AG04449 (cell line): ENCODE measurements at regions of chr13 and their contacts with region 1.

Region 1: GRCh38 chr13:31538067-31539042 is 201.0 kb upstream of the RXFP2 start:
- DNase-seq: no peak
- H3K4me3 ChIP-seq: no peak overlapping the region
- CTCF ChIP-seq: peak; percentile 61

Region 2: GRCh38 chr13:31161828-31162590 is 376.3 kb before region 1 on chr13 and contains the start of gene HSPH1:
- CTCF ChIA-PET with region 1: no interaction called
- POLR2A ChIA-PET with region 1: no interaction called
- DNase-seq: peak; percentile 89
- H3K4me3 ChIP-seq: peak within 1 kb of the TSS; percentile 96
- CTCF ChIP-seq: peak; percentile 43

Region 3: DNA sequence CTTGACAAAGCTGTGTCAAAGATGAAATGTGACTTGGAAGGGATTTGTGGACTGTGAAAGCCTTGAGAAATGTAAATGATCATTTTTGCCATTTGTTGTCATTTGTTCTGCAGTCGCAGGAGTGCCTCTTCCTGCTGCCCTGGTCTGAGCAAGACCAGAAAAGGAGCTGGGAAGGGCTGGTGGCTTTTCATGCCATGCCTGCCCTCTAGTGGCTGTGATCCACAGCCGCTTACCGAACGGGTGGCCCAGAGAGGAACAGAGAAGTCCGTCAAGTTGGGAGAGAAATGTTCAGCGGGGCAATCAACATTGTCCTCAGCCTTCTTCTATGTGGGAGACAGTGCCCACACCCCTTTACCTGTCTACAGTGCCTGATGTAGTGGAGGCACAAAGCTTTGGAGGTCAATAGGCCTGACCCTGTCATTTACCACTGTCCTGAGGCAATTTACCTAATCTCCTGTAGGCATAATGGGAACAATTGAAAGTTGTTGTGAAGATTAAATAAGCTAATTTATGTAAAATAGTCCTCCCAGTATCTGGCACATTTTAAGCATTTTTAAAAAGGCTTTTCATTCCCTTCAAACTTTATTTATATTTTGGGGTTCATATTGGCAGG is 114.1 kb before region 1 on chr13:
- CTCF ChIA-PET with region 1: interaction called, 43 read pairs
- POLR2A ChIA-PET with region 1: no interaction called
- DNase-seq: peak; percentile 23
- H3K4me3 ChIP-seq: no peak overlapping the region
- CTCF ChIP-seq: peak; percentile 91

Region 4: GRCh38 chr13:31518645-31519044 is 19.7 kb before region 1 on chr13:
- CTCF ChIA-PET with region 1: interaction called, 24 read pairs
- POLR2A ChIA-PET with region 1: no interaction called
- DNase-seq: no peak
- H3K4me3 ChIP-seq: no peak overlapping the region
- CTCF ChIP-seq: no peak

Region 5: DNA sequence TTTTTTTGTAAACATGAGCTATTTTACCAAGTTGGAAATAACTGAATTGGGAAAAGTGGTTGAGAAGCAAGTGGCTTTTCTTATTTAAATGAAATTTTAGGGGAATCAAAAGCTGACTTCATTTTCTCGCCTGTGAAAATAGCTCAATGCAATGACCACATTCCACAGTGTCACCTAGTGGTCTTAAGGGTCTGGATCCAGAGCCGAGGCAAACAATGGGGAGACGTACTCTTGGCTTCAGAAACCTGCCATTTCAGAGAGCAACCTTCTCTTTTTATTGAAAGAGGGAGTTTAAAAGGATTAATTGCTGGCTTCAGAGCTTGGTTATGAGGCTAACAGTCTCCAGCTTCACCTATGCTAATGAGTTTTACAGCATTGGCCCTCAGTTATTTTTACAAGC is 161.3 kb after region 1 on chr13:
- CTCF ChIA-PET with region 1: interaction called, 10 read pairs
- POLR2A ChIA-PET with region 1: no interaction called
- DNase-seq: no peak
- H3K4me3 ChIP-seq: no peak overlapping the region
- CTCF ChIP-seq: peak; percentile 15

Region 6: DNA sequence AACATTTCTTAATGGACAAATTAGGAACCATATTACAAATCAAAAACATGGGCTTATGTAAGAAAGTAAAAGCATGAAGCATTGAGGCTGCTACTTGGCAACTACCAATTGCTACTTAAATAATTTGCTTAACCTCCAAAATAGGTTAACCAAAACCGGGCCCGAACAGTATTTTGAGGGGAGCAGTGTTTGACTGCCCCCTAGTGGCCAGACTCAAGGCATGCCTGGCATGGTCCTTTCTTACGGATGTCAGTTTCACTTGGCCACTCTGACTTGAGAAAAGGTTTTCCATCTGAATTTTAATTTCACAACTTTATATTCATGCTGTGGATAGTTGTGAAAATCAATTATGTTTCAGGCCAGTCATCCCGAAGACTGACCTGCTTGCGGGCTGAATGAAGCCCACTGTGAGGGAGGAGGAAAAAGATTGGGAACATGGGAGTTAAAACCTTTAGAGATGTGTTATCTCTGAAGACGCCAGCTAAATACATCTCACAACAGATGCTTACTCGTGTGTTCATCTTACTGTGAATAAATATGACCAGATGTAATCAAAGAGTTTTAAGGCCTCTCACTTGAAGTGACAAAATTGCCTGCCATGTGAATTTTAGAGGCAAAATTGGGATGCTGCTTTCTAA is 203.9 kb after region 1 on chr13:
- CTCF ChIA-PET with region 1: interaction called, 133 read pairs
- POLR2A ChIA-PET with region 1: no interaction called
- DNase-seq: no peak
- H3K4me3 ChIP-seq: no peak overlapping the region
- CTCF ChIP-seq: peak; percentile 82

Region 7: DNA sequence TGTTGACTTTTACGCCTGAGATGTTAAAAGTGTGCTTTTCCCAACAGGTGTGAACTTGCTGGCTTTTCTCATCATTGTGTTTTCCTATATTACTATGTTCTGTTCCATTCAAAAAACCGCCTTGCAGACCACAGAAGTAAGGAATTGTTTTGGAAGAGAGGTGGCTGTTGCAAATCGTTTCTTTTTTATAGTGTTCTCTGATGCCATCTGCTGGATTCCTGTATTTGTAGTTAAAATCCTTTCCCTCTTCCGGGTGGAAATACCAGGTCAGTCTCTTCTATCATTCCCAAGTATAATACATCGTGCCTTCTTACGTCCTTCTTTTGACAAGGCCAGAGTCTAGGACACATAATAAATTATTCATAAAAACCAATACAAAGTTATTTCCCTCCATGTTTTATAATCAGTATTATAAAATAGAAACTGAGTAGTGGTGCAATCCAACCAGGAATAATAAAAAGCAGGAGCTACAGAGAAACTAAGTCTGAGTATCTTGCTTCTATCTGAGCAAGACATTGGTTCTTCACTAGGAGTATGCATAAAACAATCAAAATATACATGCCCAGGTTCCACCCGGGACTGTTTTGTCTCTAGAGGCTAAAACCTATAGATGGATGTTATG is 258.9 kb after region 1 on chr13:
- CTCF ChIA-PET with region 1: interaction called, 46 read pairs
- POLR2A ChIA-PET with region 1: no interaction called
- DNase-seq: no peak
- H3K4me3 ChIP-seq: no peak overlapping the region
- CTCF ChIP-seq: peak; percentile 27